ENCODE measurements at regions of chr1 and their contacts with region 1.

Region 1: GRCh38 chr1:35564037-35564883 is 6.7 kb downstream of the NCDN start:
- DNase-seq: peak; percentile 72 to 87 (median 78)
- ATAC-seq: peak in 3 of 4 donors; percentile 29 to 49 (median 43)
- H3K4me3 ChIP-seq: no peak overlapping the region
- H3K27ac ChIP-seq: no peak overlapping the region
- H3K4me1 ChIP-seq: peaks cover 0 to 28% (median 11%) of the 10 kb centered on the region in 12 donors
- H3K27me3 ChIP-seq: peaks cover 0 to 1% (median 0%) of the 10 kb centered on the region in 9 donors
- CTCF ChIP-seq: peak; percentile 59 to 85 (median 78)
- POLR2A ChIP-seq: no peak

Region 2: GRCh38 chr1:35398739-35399138 is 165.5 kb before region 1 on chr1:
- intact Hi-C with region 1: no loop called
- DNase-seq: no peak
- ATAC-seq: no peak
- H3K4me3 ChIP-seq: no peak overlapping the region
- H3K27ac ChIP-seq: no peak overlapping the region
- H3K4me1 ChIP-seq: no peaks in the 10 kb centered on the region
- H3K27me3 ChIP-seq: no peaks in the 10 kb centered on the region
- CTCF ChIP-seq: no peak
- POLR2A ChIP-seq: no peak

Region 3: GRCh38 chr1:35595684-35596083 is 31.4 kb after region 1 on chr1:
- intact Hi-C with region 1: loop called in 1 of 10 experiments (anchors 1 kb)
- DNase-seq: no peak
- ATAC-seq: no peak
- H3K4me3 ChIP-seq: no peak overlapping the region
- H3K27ac ChIP-seq: no peak overlapping the region
- H3K4me1 ChIP-seq: no peaks in the 10 kb centered on the region
- H3K27me3 ChIP-seq: no peaks in the 10 kb centered on the region
- CTCF ChIP-seq: no peak
- POLR2A ChIP-seq: no peak

Region 4: GRCh38 chr1:35726450-35727433 is 162.5 kb after region 1 on chr1:
- intact Hi-C with region 1: loop called (anchors 1 to 5 kb)
- DNase-seq: peak in 4 of 5 donors; percentile 36 to 56 (median 40)
- ATAC-seq: peak; percentile 77 to 92 (median 87)
- H3K4me3 ChIP-seq: no peak overlapping the region
- H3K27ac ChIP-seq: no peak overlapping the region
- H3K4me1 ChIP-seq: peaks cover 0 to 3% (median 0%) of the 10 kb centered on the region in 12 donors
- H3K27me3 ChIP-seq: no peaks in the 10 kb centered on the region
- CTCF ChIP-seq: peak; percentile 79 to 95 (median 85)
- POLR2A ChIP-seq: no peak

Measured in heart left ventricle (tissue), 16 donors.